ENCODE measurements at regions of chr10 and their contacts with region 1.

Region 1: GRCh38 chr10:79195091-79195923 is 126.5 kb downstream of the ZMIZ1 start:
- DNase-seq: peak; percentile 89 to 95 (median 92)
- ATAC-seq: peak; percentile 94
- H3K4me3 ChIP-seq: no peak overlapping the region
- H3K27ac ChIP-seq: no peak overlapping the region
- H3K4me1 ChIP-seq: peaks cover 17 to 33% of the 10 kb centered on the region in 2 experiments
- H3K27me3 ChIP-seq: no peaks in the 10 kb centered on the region
- CTCF ChIP-seq: peak; percentile 96 to 98 (median 97)
- EP300 ChIP-seq: peak; percentile 42; the same call in 1 of the 2 replicates
- POLR2A ChIP-seq: no peak
- RAD21 ChIP-seq: peak; percentile 99

Region 2: GRCh38 chr10:78047314-78047891 is 1147.9 kb before region 1 on chr10:
- CTCF ChIA-PET with region 1: interaction called, 11 read pairs
- POLR2A ChIA-PET with region 1: no interaction called
- in situ Hi-C with region 1: loop called (anchors 25 kb)
- intact Hi-C with region 1: loop called (anchors 5 kb)
- DNase-seq: peak; percentile 75 to 88 (median 77)
- ATAC-seq: peak; percentile 83
- H3K4me3 ChIP-seq: no peak overlapping the region
- H3K27ac ChIP-seq: no peak overlapping the region
- H3K4me1 ChIP-seq: peaks cover 0 to 17% of the 10 kb centered on the region in 2 experiments; a peak in 2 of 5 replicates
- H3K27me3 ChIP-seq: peaks cover 0 to under 1% of the 10 kb centered on the region in 2 experiments; a peak in 2 of 5 replicates
- CTCF ChIP-seq: peak; percentile 95 to 98 (median 95)
- EP300 ChIP-seq: no peak
- POLR2A ChIP-seq: no peak
- RAD21 ChIP-seq: peak; percentile 89 to 95

Region 3: DNA sequence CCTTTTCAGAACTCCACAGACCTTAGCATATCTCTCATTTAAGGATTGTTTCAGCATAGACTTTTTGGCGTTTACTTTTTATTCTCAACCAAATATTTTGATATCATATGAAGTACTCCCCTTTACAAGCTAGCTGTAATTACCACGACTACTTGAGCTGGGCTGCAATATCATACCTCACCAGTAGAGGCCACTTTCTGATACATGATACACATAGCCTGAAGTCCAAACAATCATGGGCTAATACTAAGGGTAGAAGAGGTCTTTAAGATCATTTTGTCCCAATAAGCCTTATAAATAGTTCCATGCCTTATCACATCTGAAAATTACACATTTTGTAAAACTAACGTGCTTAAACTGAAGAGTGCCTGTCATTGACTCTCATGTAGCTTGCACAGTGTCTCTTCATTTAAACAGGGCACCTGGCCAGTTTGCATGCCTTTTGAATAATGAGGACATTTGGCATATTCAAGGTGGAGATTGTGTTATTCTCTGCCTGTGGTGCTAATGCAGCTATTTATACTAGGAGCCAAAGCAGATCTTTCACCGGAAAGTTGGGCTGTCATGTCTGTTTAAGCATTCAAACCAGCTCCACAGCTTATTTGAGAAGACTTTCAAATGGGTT is 530.3 kb before region 1 on chr10:
- CTCF ChIA-PET with region 1: interaction called, 7 read pairs
- POLR2A ChIA-PET with region 1: no interaction called
- in situ Hi-C with region 1: no loop called
- intact Hi-C with region 1: loop called (anchors 5 kb)
- DNase-seq: peak; percentile 49 to 63 (median 56)
- ATAC-seq: peak; percentile 69; the same call in 1 of the 3 replicates
- H3K4me3 ChIP-seq: no peak overlapping the region
- H3K27ac ChIP-seq: no peak overlapping the region
- H3K4me1 ChIP-seq: no peaks in the 10 kb centered on the region
- H3K27me3 ChIP-seq: no peaks in the 10 kb centered on the region
- CTCF ChIP-seq: peak; percentile 58 to 73 (median 72)
- EP300 ChIP-seq: no peak
- POLR2A ChIP-seq: no peak
- RAD21 ChIP-seq: peak; percentile 58 to 78

Region 4: DNA sequence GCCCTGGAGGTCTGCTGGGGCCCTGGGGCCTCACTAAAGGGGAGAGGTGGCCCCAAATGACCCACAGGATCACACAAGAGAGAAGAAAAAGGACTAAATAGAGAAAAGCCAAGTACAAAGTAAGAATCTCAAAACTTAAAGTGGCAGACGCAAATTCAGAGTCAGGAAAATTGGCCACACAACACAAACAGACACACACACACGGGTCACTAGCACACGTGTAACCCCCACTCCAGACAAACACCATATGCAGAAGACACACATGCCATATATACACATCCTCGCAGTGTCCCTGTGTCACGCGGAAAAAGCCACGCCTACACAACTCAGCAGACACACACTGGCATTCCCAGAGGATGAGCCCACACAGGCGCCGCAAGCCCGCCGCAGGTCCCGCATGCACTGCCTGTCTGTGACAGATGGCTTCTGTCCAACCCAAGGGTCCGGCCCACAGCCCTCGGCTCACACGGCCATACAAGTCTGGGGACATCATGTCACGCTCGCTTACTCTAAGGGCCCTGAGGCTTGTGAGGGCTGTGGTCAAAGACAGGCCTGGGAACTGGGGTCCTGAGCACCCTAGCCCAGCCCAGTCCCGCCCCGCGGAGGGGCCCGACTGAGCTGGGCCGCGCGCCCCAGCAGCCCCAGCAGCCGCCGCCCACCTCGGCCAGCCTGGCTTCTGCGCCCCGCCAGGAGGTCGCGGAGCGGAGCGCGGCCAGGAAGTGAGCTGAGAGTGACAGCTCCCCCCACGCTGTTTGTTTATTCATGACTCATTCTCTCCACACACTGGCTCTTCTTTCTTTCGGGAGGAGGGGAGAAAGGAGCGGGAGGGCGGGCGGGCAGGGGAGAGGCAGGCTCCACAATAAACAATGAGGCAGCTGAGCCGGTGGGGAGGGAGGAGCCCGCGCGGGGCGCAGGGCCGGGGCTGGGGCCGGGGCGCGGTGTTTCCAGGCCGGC is 222.1 kb before region 1 on chr10:
- CTCF ChIA-PET with region 1: no interaction called
- POLR2A ChIA-PET with region 1: no interaction called
- in situ Hi-C with region 1: no loop called
- intact Hi-C with region 1: loop called (anchors 1 kb)
- DNase-seq: peak; percentile 94 to 98 (median 96)
- ATAC-seq: peak; percentile 84
- H3K4me3 ChIP-seq: peak overlapping the region; percentile 44
- H3K27ac ChIP-seq: peak overlapping the region; percentile 98
- H3K4me1 ChIP-seq: peaks cover 32 to 35% of the 10 kb centered on the region in 2 experiments
- H3K27me3 ChIP-seq: peaks cover 3 to 19% of the 10 kb centered on the region in 2 experiments; a peak in 4 of 5 replicates
- CTCF ChIP-seq: peak in 1 of 3 experiments; percentile 15; a peak in 1 of 6 replicates
- EP300 ChIP-seq: peak; percentile 79
- POLR2A ChIP-seq: peak; percentile 85
- RAD21 ChIP-seq: no peak; a peak in 1 of 4 replicates

Region 5: GRCh38 chr10:79127151-79127961 is 68.0 kb before region 1 on chr10:
- CTCF ChIA-PET with region 1: interaction called, 3 read pairs
- POLR2A ChIA-PET with region 1: interaction called, 3 read pairs
- in situ Hi-C with region 1: no loop called
- intact Hi-C with region 1: loop called (anchors 1 kb)
- DNase-seq: peak; percentile 73 to 88 (median 82)
- ATAC-seq: peak; percentile 88
- H3K4me3 ChIP-seq: no peak overlapping the region
- H3K27ac ChIP-seq: peak overlapping the region; percentile 51; the same call in 2 of the 3 replicates
- H3K4me1 ChIP-seq: peaks cover 64 to 79% of the 10 kb centered on the region in 2 experiments
- H3K27me3 ChIP-seq: no peaks in the 10 kb centered on the region
- CTCF ChIP-seq: peak in 2 of 3 experiments; percentile 40 to 44; a peak in 3 of 6 replicates
- EP300 ChIP-seq: peak; percentile 37; the same call in 1 of the 2 replicates
- POLR2A ChIP-seq: no peak
- RAD21 ChIP-seq: peak; percentile 32 to 44

Measured in K562 (cell line).